ENCODE measurements at regions of chr1 and their contacts with region 1.

Region 1: DNA sequence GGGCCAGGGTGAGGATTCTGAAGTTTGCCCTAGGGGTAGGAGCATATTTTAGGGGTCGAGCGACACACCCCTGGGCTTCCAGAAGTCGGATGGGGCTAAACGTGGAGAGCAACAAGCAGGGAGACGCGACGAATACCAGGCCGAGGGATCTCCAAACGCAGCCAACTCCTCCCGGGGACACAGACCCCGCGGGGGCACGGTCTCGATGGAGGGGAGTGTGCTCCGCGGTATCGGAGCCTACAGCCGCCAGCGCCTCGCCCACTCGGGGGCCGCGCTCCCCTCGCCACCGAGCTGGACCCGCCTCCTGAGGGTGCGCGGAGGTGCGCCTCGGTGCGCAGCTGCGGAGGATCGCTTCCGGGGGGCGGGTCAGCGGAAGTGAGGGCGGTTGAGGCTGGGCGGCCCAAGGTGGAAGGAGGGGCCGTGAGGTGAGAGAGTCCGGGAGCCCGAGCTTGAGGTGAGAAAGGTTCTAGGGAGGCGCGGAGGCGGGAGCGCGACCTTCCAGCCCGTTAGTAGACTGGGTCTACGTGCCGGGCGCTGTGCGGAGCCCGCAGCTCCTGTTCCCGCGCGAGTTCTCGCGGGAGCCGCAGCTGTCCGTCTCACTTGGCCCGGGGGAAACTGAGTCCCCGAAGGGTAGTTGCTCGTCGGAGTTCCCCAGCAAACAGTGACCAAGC is at the start of gene MTFR1L:
- DNase-seq: peak; percentile 98
- ATAC-seq: peak; percentile 92
- H3K4me3 Mint-ChIP-seq: peak within 1 kb of the TSS; percentile 95
- H3K27ac Mint-ChIP-seq: peak within 1 kb of the TSS; percentile 95
- H3K4me1 Mint-ChIP-seq: peaks cover 28% of the 10 kb centered on the region
- H3K27me3 Mint-ChIP-seq: no peaks in the 10 kb centered on the region
- CTCF ChIP-seq: no peak
- total RNA-seq, gene MTFR1L: 25.6 to 27.4 TPM

Region 2: GRCh38 chr1:25832336-25833037 is 12.8 kb after region 1 on chr1:
- CTCF ChIA-PET with region 1: interaction called, 18 read pairs
- POLR2A ChIA-PET with region 1: interaction called, 23 read pairs
- intact Hi-C with region 1: no loop called
- DNase-seq: no peak
- ATAC-seq: no peak
- H3K4me3 Mint-ChIP-seq: no peak overlapping the region
- H3K27ac Mint-ChIP-seq: no peak overlapping the region
- H3K4me1 Mint-ChIP-seq: peaks cover 5% of the 10 kb centered on the region
- H3K27me3 Mint-ChIP-seq: no peaks in the 10 kb centered on the region
- CTCF ChIP-seq: no peak

Measured in activated CD8-positive, alpha-beta T cell treated with anti-CD3 and anti-CD28 coated beads for 36 hours (primary cell).